Heart right ventricle (tissue), 16 donors: ENCODE measurements at regions of chr9 and their contacts with region 1.

Region 1: DNA sequence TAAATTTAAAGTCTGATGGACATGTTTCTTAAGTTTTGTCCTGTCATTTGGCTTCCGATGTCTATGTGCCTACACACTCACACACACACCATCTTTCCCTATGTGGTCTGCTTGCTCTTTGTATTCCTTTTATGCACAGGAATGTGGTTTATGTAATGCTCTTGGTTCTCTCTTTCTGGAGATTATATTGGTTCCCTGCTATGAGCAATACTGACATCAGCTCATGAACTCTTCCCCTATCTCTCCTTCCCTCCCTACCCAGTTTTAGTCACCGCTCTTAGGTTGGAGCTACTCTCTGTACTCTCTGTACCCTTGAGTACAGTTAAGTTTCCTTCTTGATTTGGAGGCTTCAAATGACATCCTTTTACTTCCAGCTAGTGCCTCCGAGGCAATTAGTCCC is 77.9 kb upstream of the MVB12B start:
- DNase-seq: no peak
- ATAC-seq: no peak
- H3K4me3 ChIP-seq: no peak overlapping the region
- H3K27ac ChIP-seq: no peak overlapping the region
- H3K4me1 ChIP-seq: no peaks in the 10 kb centered on the region
- H3K27me3 ChIP-seq: peaks cover 0 to 15% (median 8%) of the 10 kb centered on the region in 7 donors
- CTCF ChIP-seq: no peak

Region 2: DNA sequence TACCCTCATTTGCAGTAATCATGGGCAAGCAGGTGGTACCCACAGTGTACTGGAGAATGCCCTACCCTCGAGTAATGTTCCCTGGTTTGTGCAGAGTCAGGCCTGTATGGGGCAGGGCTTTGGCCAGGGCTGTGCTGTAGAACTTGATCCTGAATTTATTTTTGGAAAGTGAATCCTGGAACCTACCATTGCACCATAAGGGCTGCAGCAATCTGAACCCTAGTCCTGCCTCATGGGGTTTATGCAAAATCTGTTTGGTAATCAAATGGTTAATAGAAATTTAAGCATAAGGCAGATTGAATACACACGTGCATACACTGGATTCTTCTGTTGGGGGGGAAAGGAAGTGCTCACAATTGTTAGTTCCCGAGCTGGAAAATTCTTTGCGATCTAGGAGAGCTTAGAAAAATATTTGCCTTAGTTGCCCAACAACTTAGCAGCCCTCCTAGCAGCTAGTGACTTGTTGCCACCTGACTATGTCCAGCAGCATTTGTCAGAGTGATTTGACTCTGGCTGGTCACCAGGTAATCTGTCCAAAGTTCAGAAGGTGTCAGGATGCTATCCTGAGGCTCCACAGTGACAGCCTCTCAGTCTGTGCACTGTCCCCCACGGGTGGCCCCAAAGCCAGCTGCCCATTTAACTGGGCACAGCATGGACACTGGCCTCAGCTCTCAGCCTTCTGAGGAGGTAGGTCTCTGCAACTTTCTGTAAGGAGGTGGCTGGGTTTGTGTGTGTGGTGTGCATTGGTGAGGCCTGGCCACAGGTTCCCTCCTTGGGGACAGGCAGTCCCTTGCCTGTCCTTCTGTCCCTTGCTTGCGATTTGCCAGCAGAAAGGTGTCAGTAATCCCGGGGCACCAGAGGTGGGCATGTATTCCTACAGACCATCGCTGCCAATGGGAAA is 86.3 kb after region 1 on chr9:
- intact Hi-C with region 1: loop called in 1 of 10 experiments (anchors 5 kb)
- DNase-seq: no peak
- ATAC-seq: peak; percentile 13 to 84 (median 75)
- H3K4me3 ChIP-seq: peak overlapping the region in 5 of 10 donors; percentile 3 to 36 (median 18)
- H3K27ac ChIP-seq: peak overlapping the region in 8 of 10 donors; percentile 36 to 81 (median 66)
- H3K4me1 ChIP-seq: peaks cover 15 to 88% (median 49%) of the 10 kb centered on the region in 9 donors
- H3K27me3 ChIP-seq: no peaks in the 10 kb centered on the region
- CTCF ChIP-seq: no peak

Region 3: GRCh38 chr9:126885131-126885641 is 636.5 kb after region 1 on chr9:
- intact Hi-C with region 1: no loop called
- DNase-seq: no peak
- ATAC-seq: peak in 7 of 8 donors; percentile 24 to 74 (median 44)
- H3K4me3 ChIP-seq: no peak overlapping the region
- H3K27ac ChIP-seq: peak overlapping the region in 4 of 10 donors; percentile 15 to 54 (median 30)
- H3K4me1 ChIP-seq: peaks cover 0 to 22% (median 16%) of the 10 kb centered on the region in 9 donors
- H3K27me3 ChIP-seq: no peaks in the 10 kb centered on the region
- CTCF ChIP-seq: no peak